Gastrocnemius medialis (tissue), 4 donors: ENCODE measurements at regions of chr5 and their contacts with region 1.

Region 1: GRCh38 chr5:103258368-103258956 is at the start of gene MACIR:
- DNase-seq: peak; percentile 95 to 97
- ATAC-seq: peak; percentile 83 to 86
- H3K4me3 ChIP-seq: peak within 1 kb of the TSS; percentile 88 to 98 (median 93)
- H3K27ac ChIP-seq: peak within 1 kb of the TSS; percentile 81 to 95 (median 92)
- H3K4me1 ChIP-seq: peaks cover 41% of the 10 kb centered on the region in 2 donors
- H3K27me3 ChIP-seq: no peaks in the 10 kb centered on the region
- CTCF ChIP-seq: peak in 1 of 5 experiments; percentile 35
- POLR2A ChIP-seq: peak; percentile 63 to 80
- total RNA-seq, gene MACIR: 8.0 to 26.6 (median 21.7) TPM

Region 2: GRCh38 chr5:102737805-102738469 is 520.5 kb before region 1 on chr5:
- in situ Hi-C with region 1: no loop called
- intact Hi-C with region 1: no loop called
- DNase-seq: no peak
- ATAC-seq: no peak
- H3K4me3 ChIP-seq: no peak overlapping the region
- H3K27ac ChIP-seq: no peak overlapping the region
- H3K4me1 ChIP-seq: no peaks in the 10 kb centered on the region
- H3K27me3 ChIP-seq: no peaks in the 10 kb centered on the region
- CTCF ChIP-seq: no peak
- POLR2A ChIP-seq: no peak

Region 3: GRCh38 chr5:103119765-103120606 is 138.5 kb before region 1 on chr5 and contains the starts of genes GIN1 and PPIP5K2:
- in situ Hi-C with region 1: no loop called
- intact Hi-C with region 1: loop called (anchors 1 kb)
- DNase-seq: peak; percentile 92 to 94
- ATAC-seq: peak; percentile 98 to 100
- H3K4me3 ChIP-seq: peak within 1 kb of the TSS; percentile 70 to 91 (median 86)
- H3K27ac ChIP-seq: peak within 1 kb of the TSS; percentile 86 to 96 (median 92)
- H3K4me1 ChIP-seq: peaks cover 28 to 30% of the 10 kb centered on the region in 2 donors
- H3K27me3 ChIP-seq: no peaks in the 10 kb centered on the region
- CTCF ChIP-seq: no peak
- POLR2A ChIP-seq: peak; percentile 46 to 53
- total RNA-seq, gene GIN1: 4.6 to 11.2 (median 6.9) TPM
- total RNA-seq, gene PPIP5K2: 3.5 to 7.0 (median 4.4) TPM

Region 4: DNA sequence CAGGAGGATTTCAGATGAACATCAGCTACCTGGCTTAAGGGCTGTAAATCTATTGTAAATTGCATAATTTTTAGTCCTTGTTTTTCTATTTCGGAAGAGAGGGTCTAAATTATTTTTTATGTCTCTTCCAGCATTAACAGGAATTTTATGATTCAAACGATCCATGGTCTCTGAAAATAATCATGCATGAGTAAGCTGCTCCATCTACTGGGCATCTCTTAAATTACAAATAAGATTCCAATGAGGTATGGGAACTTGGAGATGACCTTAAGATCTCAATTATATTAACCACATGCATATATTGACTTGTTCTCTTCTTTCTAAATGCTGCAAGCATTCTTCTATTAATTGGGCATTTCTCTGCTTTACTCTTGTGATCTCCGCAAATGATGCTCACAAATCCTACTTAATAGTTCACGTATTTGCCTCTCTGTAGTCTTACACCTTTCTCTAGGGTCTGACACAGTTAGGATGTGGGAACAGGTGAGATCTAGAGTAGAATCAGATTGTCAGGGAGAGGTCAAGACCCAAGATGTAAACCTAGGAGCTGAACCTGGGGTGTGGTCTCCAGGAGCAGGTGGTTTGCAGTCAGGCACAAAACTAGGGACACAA is 217.3 kb after region 1 on chr5:
- in situ Hi-C with region 1: no loop called
- intact Hi-C with region 1: loop called (anchors 1 kb)
- DNase-seq: no peak
- ATAC-seq: peak; percentile 35 to 48
- H3K4me3 ChIP-seq: no peak overlapping the region
- H3K27ac ChIP-seq: no peak overlapping the region
- H3K4me1 ChIP-seq: peaks cover 21 to 36% of the 10 kb centered on the region in 2 donors
- H3K27me3 ChIP-seq: no peaks in the 10 kb centered on the region
- CTCF ChIP-seq: peak; percentile 42 to 79 (median 67)
- POLR2A ChIP-seq: no peak

Region 5: DNA sequence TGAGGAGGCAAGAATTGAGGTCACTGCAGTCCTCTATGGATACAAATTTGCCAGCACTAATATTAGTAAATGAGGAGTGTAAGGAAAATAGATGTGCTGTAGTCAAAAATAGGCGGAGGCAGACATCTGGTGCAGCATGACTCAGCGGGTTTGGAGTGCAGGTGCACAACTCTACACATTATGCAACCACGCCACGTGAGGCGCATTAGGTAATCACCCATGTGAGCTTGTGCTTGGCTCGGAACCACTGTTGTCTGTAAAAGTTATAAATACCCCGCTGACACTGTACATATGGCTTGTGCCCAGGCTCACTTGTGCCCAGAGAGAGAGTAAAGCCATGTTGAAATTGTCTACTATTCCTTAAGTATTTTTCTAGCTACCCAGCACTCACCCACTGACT is 927.6 kb after region 1 on chr5:
- in situ Hi-C with region 1: no loop called
- intact Hi-C with region 1: loop called (anchors 5 kb)
- DNase-seq: peak; percentile 76 to 96
- ATAC-seq: peak; percentile 90 to 95
- H3K4me3 ChIP-seq: no peak overlapping the region
- H3K27ac ChIP-seq: peak overlapping the region; percentile 68 to 84 (median 77)
- H3K4me1 ChIP-seq: peaks cover 9 to 11% of the 10 kb centered on the region in 2 donors
- H3K27me3 ChIP-seq: no peaks in the 10 kb centered on the region
- CTCF ChIP-seq: no peak
- POLR2A ChIP-seq: no peak